ENCODE measurements at regions of chr4 and their contacts with region 1.

Region 1: GRCh38 chr4:75514131-75514948 is at the starts of genes RCHY1 and THAP6:
- DNase-seq: peak; percentile 98
- H3K4me3 Mint-ChIP-seq: no peak within 1 kb of the TSS
- H3K27ac Mint-ChIP-seq: peak within 1 kb of the TSS; percentile 99
- H3K4me1 Mint-ChIP-seq: peaks cover 29% of the 10 kb centered on the region
- H3K27me3 Mint-ChIP-seq: no peaks in the 10 kb centered on the region
- total RNA-seq, gene RCHY1: 22.4 and 29.4 TPM in 2 replicates
- total RNA-seq, gene THAP6: 16.3 and 22.7 TPM in 2 replicates

Region 2: GRCh38 chr4:74157561-74158465 is 1356.5 kb before region 1 on chr4 and contains the start of gene MTHFD2L:
- intact Hi-C with region 1: loop called (anchors 10 kb)
- DNase-seq: peak; percentile 96
- H3K4me3 Mint-ChIP-seq: peak within 1 kb of the TSS; percentile 85
- H3K27ac Mint-ChIP-seq: peak within 1 kb of the TSS; percentile 90
- H3K4me1 Mint-ChIP-seq: peaks cover 16% of the 10 kb centered on the region
- H3K27me3 Mint-ChIP-seq: peaks cover 26% of the 10 kb centered on the region
- total RNA-seq, gene MTHFD2L: 9.4 and 10.0 TPM in 2 replicates

Measured in activated CD4-positive, alpha-beta T cell treated with anti-CD3 and anti-CD28 coated beads, Interleukin-2, amount 10 ng/mL, durations not matched to agents 24 days and 14 days (primary cell).